PC-3 (cell line): ENCODE measurements at regions of chr20 and their contacts with region 1.

Region 1: DNA sequence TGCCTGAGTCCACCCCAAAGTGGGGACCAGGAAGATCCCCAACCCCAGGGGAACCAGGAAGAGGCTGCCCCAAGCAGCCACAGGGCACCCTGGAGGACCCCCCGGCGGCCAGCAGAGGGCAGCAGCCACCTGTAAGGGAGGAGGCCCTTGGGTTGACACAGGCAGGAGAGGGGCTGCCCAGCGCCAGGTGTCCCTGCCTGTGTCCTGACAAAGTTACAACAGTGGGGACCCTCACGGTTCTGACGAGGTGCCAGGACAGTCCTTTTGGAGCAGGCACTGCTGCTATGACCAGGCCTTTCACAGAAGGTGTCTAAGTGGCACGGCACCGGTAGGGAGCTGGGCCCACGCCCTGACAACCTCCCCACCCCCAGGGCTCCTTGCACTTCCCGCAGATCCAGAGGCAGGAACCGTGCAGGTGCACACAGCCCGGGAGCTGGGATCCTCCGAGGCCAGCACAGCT is 176.7 kb downstream of the BMP7 start:
- DNase-seq: peak; percentile 83
- ATAC-seq: peak; percentile 93
- H3K4me3 ChIP-seq: no peak overlapping the region
- H3K27ac ChIP-seq: no peak overlapping the region
- H3K4me1 ChIP-seq: no peaks in the 10 kb centered on the region
- H3K27me3 ChIP-seq: peaks cover 17% of the 10 kb centered on the region
- CTCF ChIP-seq: peak; percentile 100

Region 2: GRCh38 chr20:57335392-57335791 is 245.7 kb after region 1 on chr20:
- CTCF ChIA-PET with region 1: interaction called, 12 read pairs
- POLR2A ChIA-PET with region 1: no interaction called
- intact Hi-C with region 1: loop called (anchors 1 kb)
- DNase-seq: peak; percentile 45
- ATAC-seq: peak; percentile 61
- H3K4me3 ChIP-seq: no peak overlapping the region
- H3K27ac ChIP-seq: no peak overlapping the region
- H3K4me1 ChIP-seq: no peaks in the 10 kb centered on the region
- H3K27me3 ChIP-seq: peaks cover 72% of the 10 kb centered on the region
- CTCF ChIP-seq: peak; percentile 54; the same call in 1 of the 2 replicates

Region 3: GRCh38 chr20:57346477-57346876 is 256.8 kb after region 1 on chr20:
- CTCF ChIA-PET with region 1: interaction called, 7 read pairs
- POLR2A ChIA-PET with region 1: no interaction called
- intact Hi-C with region 1: loop called (anchors 1 kb)
- DNase-seq: peak; percentile 94
- ATAC-seq: peak; percentile 57
- H3K4me3 ChIP-seq: no peak overlapping the region
- H3K27ac ChIP-seq: no peak overlapping the region
- H3K4me1 ChIP-seq: peaks cover 11% of the 10 kb centered on the region
- H3K27me3 ChIP-seq: 0 out of 2 replicates have a peak, but pooled peaks cover under 1% of the 10 kb centered on the region
- CTCF ChIP-seq: peak; percentile 97